ENCODE measurements at regions of chr6 and their contacts with region 1.

Region 1: DNA sequence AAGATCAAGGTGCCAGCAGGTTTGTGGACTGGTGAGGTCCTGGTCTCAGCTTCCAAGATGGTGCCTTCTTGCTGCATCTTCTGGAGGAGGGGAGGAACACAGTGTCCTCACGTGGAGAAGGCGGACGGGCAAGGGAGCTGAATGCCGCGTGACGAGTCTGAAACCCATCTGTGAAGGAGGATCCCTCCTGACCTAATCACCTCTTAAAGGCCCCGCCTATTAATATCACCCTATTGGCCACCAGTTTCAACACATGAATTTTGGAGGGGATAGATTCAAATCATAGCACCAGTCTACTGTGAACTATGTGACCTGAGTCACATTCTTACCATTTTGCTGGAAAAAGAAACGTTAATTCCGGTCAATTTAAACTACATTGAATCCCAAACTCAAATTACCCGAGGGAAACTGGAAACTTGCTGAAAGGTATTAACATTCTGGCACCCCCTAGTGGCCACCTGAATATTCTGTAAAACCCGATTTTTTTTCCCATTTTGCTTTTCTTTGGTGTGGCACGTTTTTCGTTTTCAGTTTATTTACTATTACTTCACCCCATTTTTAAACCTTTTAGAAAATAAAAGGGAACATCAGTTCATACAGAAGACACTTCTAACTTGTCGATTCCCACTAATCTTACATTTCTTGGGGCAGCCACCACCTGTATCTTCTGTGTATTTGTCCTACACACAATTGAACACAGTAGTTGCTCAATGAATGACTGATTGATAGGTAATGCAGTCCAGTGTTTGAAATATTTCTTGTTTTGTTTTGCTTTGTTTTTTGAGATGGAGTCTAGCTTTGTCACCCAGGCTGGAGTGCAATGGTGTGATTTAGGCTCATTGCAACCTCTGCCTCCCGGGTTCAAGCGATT is 17.9 kb upstream of the CCDC170 start:
- DNase-seq: peak; percentile 41 to 57 (median 52)
- H3K4me3 ChIP-seq: no peak overlapping the region
- H3K4me3 Mint-ChIP-seq: peak overlapping the region in 5 of 8 donors; percentile 2 to 53 (median 20)
- H3K27ac ChIP-seq: no peak overlapping the region
- H3K27ac Mint-ChIP-seq: peak overlapping the region in 1 of 7 donors; percentile 42
- H3K4me1 ChIP-seq: peaks cover 9% of the 10 kb centered on the region
- H3K4me1 Mint-ChIP-seq: peaks cover 7 to 8% (median 8%) of the 10 kb centered on the region in 4 donors
- H3K27me3 ChIP-seq: no peaks in the 10 kb centered on the region
- H3K27me3 Mint-ChIP-seq: no peaks in the 10 kb centered on the region

Region 2: DNA sequence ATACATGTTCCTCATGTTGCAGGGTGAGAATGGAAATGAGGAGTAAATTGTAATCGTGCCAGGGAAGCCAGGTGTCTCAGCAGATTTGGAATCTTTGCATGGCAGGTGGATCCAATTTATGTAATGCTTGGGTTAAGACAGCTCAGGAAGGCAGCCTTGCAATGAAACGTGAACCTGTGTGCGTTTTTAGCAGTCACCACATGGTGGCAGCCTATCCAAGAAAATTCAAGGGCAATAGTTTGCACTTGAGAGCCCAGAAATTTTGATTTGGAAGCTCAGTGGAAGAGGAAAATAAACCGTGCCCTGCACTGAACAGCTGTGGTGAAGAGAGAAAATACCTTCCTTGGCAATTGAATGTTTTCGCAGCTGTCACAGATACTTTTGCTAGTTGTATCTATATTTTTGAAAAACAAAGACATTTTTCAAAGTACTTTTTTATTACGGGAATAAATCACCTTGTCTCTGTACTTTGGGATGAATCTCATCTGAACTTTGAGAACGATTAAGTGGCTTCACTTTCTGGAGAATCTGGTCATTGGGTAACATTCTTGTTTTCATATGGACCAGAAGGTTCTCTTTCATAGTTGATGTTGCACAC is 583.9 kb before region 1 on chr6:
- CTCF ChIA-PET with region 1: no interaction called
- POLR2A ChIA-PET with region 1: no interaction called
- intact Hi-C with region 1: loop called (anchors 5 kb)
- DNase-seq: peak; percentile 50 to 59 (median 50)
- H3K4me3 ChIP-seq: no peak overlapping the region
- H3K4me3 Mint-ChIP-seq: no peak overlapping the region
- H3K27ac ChIP-seq: no peak overlapping the region
- H3K27ac Mint-ChIP-seq: peak overlapping the region in 1 of 7 donors; percentile 1
- H3K4me1 ChIP-seq: peaks cover 17% of the 10 kb centered on the region
- H3K4me1 Mint-ChIP-seq: peaks cover 8 to 21% (median 19%) of the 10 kb centered on the region in 4 donors
- H3K27me3 ChIP-seq: no peaks in the 10 kb centered on the region
- H3K27me3 Mint-ChIP-seq: no peaks in the 10 kb centered on the region

Region 3: GRCh38 chr6:151339369-151339768 is 136.5 kb before region 1 on chr6:
- CTCF ChIA-PET with region 1: no interaction called
- POLR2A ChIA-PET with region 1: no interaction called
- intact Hi-C with region 1: loop called (anchors 5 kb)
- DNase-seq: no peak
- H3K4me3 ChIP-seq: no peak overlapping the region
- H3K4me3 Mint-ChIP-seq: no peak overlapping the region
- H3K27ac ChIP-seq: no peak overlapping the region
- H3K27ac Mint-ChIP-seq: no peak overlapping the region
- H3K4me1 ChIP-seq: no peaks in the 10 kb centered on the region
- H3K4me1 Mint-ChIP-seq: peaks cover 0 to 4% (median 3%) of the 10 kb centered on the region in 4 donors
- H3K27me3 ChIP-seq: no peaks in the 10 kb centered on the region
- H3K27me3 Mint-ChIP-seq: peaks cover 3 to 4% of the 10 kb centered on the region in 2 donors

Region 4: GRCh38 chr6:151349651-151350282 is 126.1 kb before region 1 on chr6:
- CTCF ChIA-PET with region 1: interaction called, 3 read pairs
- POLR2A ChIA-PET with region 1: no interaction called
- intact Hi-C with region 1: loop called (anchors 1 kb)
- DNase-seq: no peak
- H3K4me3 ChIP-seq: no peak overlapping the region
- H3K4me3 Mint-ChIP-seq: peak overlapping the region in 1 of 8 donors; percentile 8
- H3K27ac ChIP-seq: no peak overlapping the region
- H3K27ac Mint-ChIP-seq: peak overlapping the region in 2 of 7 donors; percentile 1 to 39
- H3K4me1 ChIP-seq: peaks cover 13% of the 10 kb centered on the region
- H3K4me1 Mint-ChIP-seq: no peaks in the 10 kb centered on the region
- H3K27me3 ChIP-seq: no peaks in the 10 kb centered on the region
- H3K27me3 Mint-ChIP-seq: peaks cover 0 to 5% of the 10 kb centered on the region in 2 donors

Region 5: DNA sequence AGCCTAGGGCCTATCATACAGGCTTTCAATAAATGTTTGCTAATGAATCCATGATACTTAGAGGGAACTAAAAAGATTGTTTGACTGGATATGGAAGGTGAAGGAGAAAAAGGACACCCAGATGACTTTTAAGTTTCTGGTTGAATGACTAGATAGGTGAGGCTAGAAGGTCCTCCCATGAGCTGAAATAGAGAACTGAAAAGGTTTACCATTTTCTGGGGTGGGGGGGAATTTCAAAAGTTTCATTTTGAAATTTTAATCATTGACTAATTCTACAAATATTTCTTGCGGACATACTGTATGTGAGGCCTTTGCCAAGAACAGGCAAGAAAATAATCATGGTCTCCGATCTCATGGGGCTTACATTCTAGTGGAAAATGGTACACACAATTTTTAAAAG is 66.6 kb before region 1 on chr6:
- CTCF ChIA-PET with region 1: interaction called, 35 read pairs
- POLR2A ChIA-PET with region 1: interaction called, 3 read pairs
- intact Hi-C with region 1: loop called (anchors 1 kb)
- DNase-seq: no peak
- H3K4me3 ChIP-seq: no peak overlapping the region
- H3K4me3 Mint-ChIP-seq: no peak overlapping the region
- H3K27ac ChIP-seq: no peak overlapping the region
- H3K27ac Mint-ChIP-seq: peak overlapping the region in 5 of 7 donors; percentile 3 to 79 (median 60)
- H3K4me1 ChIP-seq: peaks cover 16% of the 10 kb centered on the region
- H3K4me1 Mint-ChIP-seq: peaks cover 22 to 33% (median 29%) of the 10 kb centered on the region in 4 donors
- H3K27me3 ChIP-seq: no peaks in the 10 kb centered on the region
- H3K27me3 Mint-ChIP-seq: no peaks in the 10 kb centered on the region

Region 6: DNA sequence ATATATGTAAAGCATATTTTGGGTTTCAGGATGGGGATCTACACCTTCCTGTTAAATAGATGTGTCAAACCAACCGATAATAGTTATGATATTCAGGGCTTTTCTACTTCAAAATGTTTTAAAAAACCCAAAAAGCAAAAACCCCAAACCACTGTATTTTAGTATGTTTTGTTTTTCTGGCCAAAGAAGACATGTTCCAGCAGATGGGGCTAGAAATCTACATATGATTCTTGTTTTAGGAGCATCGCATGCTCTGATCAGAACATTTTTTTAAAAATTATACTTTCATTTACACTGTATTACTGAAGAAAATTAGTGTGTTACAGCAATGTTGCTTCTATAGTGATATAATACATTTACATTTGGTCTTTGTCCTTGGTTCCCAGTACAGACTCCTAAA is 35.0 kb before region 1 on chr6:
- CTCF ChIA-PET with region 1: interaction called, 42 read pairs
- POLR2A ChIA-PET with region 1: no interaction called
- intact Hi-C with region 1: loop called (anchors 1 kb)
- DNase-seq: peak in 4 of 5 donors; percentile 11 to 32 (median 18)
- H3K4me3 ChIP-seq: no peak overlapping the region
- H3K4me3 Mint-ChIP-seq: peak overlapping the region in 1 of 8 donors; percentile 17
- H3K27ac ChIP-seq: no peak overlapping the region
- H3K27ac Mint-ChIP-seq: no peak overlapping the region
- H3K4me1 ChIP-seq: peaks cover 16% of the 10 kb centered on the region
- H3K4me1 Mint-ChIP-seq: peaks cover 27 to 54% (median 35%) of the 10 kb centered on the region in 4 donors
- H3K27me3 ChIP-seq: no peaks in the 10 kb centered on the region
- H3K27me3 Mint-ChIP-seq: no peaks in the 10 kb centered on the region

Measured in CD4-positive, alpha-beta memory T cell (primary cell).